Activated CD4-positive, alpha-beta T cell treated with anti-CD3 and anti-CD28 coated beads for 36 hours (primary cell): ENCODE measurements at regions of chr1 and their contacts with region 1.

Region 1: DNA sequence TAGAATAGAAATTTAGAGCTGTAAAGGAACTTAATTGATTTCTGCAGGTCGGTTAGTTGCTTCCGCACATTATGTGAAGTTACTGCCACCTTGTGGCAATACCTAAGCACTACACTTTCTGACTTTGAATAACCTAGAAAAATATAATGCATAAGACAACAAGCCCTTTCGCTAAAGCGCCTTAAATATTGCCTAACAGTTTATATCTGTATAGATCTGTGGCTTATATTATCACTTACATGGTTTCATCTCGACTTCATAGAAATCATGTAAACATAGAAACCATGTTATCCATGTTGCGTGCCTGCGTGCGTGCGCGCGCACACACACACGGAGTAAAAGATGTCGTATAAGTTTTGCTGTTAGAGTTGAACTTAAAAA is 10.9 kb upstream of the IFI16 start:
- DNase-seq: peak; percentile 50
- ATAC-seq: peak; percentile 56
- H3K4me3 Mint-ChIP-seq: no peak overlapping the region
- H3K27ac Mint-ChIP-seq: no peak overlapping the region
- H3K4me1 Mint-ChIP-seq: peaks cover 27% of the 10 kb centered on the region
- H3K27me3 Mint-ChIP-seq: no peaks in the 10 kb centered on the region

Region 2: GRCh38 chr1:158203693-158204457 is 794.9 kb before region 1 on chr1:
- CTCF ChIA-PET with region 1: interaction called, 7 read pairs
- POLR2A ChIA-PET with region 1: no interaction called
- intact Hi-C with region 1: loop called (anchors 1 to 2 kb)
- DNase-seq: peak; percentile 20
- ATAC-seq: peak; percentile 87
- H3K4me3 Mint-ChIP-seq: no peak overlapping the region
- H3K27ac Mint-ChIP-seq: no peak overlapping the region
- H3K4me1 Mint-ChIP-seq: peaks cover 9% of the 10 kb centered on the region
- H3K27me3 Mint-ChIP-seq: peaks cover 22% of the 10 kb centered on the region

Region 3: GRCh38 chr1:158248118-158248517 is 750.7 kb before region 1 on chr1:
- CTCF ChIA-PET with region 1: no interaction called
- POLR2A ChIA-PET with region 1: no interaction called
- intact Hi-C with region 1: loop called in 1 of 2 experiments (anchors 5 kb)
- DNase-seq: peak; percentile 52
- ATAC-seq: no peak
- H3K4me3 Mint-ChIP-seq: no peak overlapping the region
- H3K27ac Mint-ChIP-seq: no peak overlapping the region
- H3K4me1 Mint-ChIP-seq: peaks cover 21% of the 10 kb centered on the region
- H3K27me3 Mint-ChIP-seq: peaks cover 30% of the 10 kb centered on the region

Region 4: GRCh38 chr1:158506369-158506987 is 492.3 kb before region 1 on chr1:
- CTCF ChIA-PET with region 1: interaction called, 10 read pairs
- POLR2A ChIA-PET with region 1: no interaction called
- intact Hi-C with region 1: loop called (anchors 1 to 5 kb)
- DNase-seq: peak; percentile 64
- ATAC-seq: peak; percentile 58
- H3K4me3 Mint-ChIP-seq: no peak overlapping the region
- H3K27ac Mint-ChIP-seq: no peak overlapping the region
- H3K4me1 Mint-ChIP-seq: no peaks in the 10 kb centered on the region
- H3K27me3 Mint-ChIP-seq: peaks cover 27% of the 10 kb centered on the region

Region 5: GRCh38 chr1:158559696-158560095 is 439.1 kb before region 1 on chr1:
- CTCF ChIA-PET with region 1: no interaction called
- POLR2A ChIA-PET with region 1: no interaction called
- intact Hi-C with region 1: no loop called
- DNase-seq: no peak
- ATAC-seq: no peak
- H3K4me3 Mint-ChIP-seq: no peak overlapping the region
- H3K27ac Mint-ChIP-seq: no peak overlapping the region
- H3K4me1 Mint-ChIP-seq: no peaks in the 10 kb centered on the region
- H3K27me3 Mint-ChIP-seq: peaks cover 5% of the 10 kb centered on the region

Region 6: DNA sequence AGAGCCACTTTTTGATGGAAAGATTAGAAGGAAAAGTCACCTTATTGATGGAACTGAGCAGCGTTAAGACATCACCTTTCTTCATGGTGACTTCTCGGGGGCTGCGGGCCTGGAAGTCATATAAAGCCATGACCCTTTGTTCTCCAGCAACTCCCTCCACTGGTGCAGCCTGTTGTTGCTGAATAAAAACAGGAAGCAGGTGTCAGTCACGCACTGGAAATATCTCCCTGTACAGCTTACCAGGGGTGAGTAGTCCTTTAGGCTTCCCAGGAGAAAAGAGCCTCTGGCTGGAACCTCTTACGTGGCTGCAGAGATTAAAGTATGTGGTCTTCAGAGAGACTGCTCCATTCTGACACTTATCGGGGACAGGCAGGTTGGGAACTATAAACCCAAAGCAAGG is 344.2 kb before region 1 on chr1:
- CTCF ChIA-PET with region 1: interaction called, 3 read pairs
- POLR2A ChIA-PET with region 1: no interaction called
- intact Hi-C with region 1: loop called in 1 of 2 experiments (anchors 10 kb)
- DNase-seq: peak; percentile 4
- ATAC-seq: no peak
- H3K4me3 Mint-ChIP-seq: no peak overlapping the region
- H3K27ac Mint-ChIP-seq: no peak overlapping the region
- H3K4me1 Mint-ChIP-seq: peaks cover 3% of the 10 kb centered on the region
- H3K27me3 Mint-ChIP-seq: peaks cover 4% of the 10 kb centered on the region

Region 7: GRCh38 chr1:158793604-158794003 is 205.2 kb before region 1 on chr1:
- CTCF ChIA-PET with region 1: interaction called, 14 read pairs
- POLR2A ChIA-PET with region 1: no interaction called
- intact Hi-C with region 1: loop called (anchors 1 to 5 kb)
- DNase-seq: peak; percentile 51
- ATAC-seq: peak; percentile 36
- H3K4me3 Mint-ChIP-seq: no peak overlapping the region
- H3K27ac Mint-ChIP-seq: no peak overlapping the region
- H3K4me1 Mint-ChIP-seq: no peaks in the 10 kb centered on the region
- H3K27me3 Mint-ChIP-seq: peaks cover 5% of the 10 kb centered on the region

Region 8: GRCh38 chr1:158969855-158970254 is 28.9 kb before region 1 on chr1:
- CTCF ChIA-PET with region 1: interaction called, 10 read pairs
- POLR2A ChIA-PET with region 1: no interaction called
- intact Hi-C with region 1: no loop called
- DNase-seq: peak; percentile 25
- ATAC-seq: peak; percentile 72
- H3K4me3 Mint-ChIP-seq: no peak overlapping the region
- H3K27ac Mint-ChIP-seq: peak overlapping the region; percentile 88
- H3K4me1 Mint-ChIP-seq: peaks cover 25% of the 10 kb centered on the region
- H3K27me3 Mint-ChIP-seq: peaks cover 3% of the 10 kb centered on the region

Region 9: GRCh38 chr1:159030877-159031447 is 32.2 kb after region 1 on chr1:
- CTCF ChIA-PET with region 1: no interaction called
- POLR2A ChIA-PET with region 1: no interaction called
- intact Hi-C with region 1: no loop called
- DNase-seq: no peak
- ATAC-seq: no peak
- H3K4me3 Mint-ChIP-seq: no peak overlapping the region
- H3K27ac Mint-ChIP-seq: no peak overlapping the region
- H3K4me1 Mint-ChIP-seq: peaks cover 52% of the 10 kb centered on the region
- H3K27me3 Mint-ChIP-seq: no peaks in the 10 kb centered on the region

Region 10: GRCh38 chr1:159089184-159089791 is 90.5 kb after region 1 on chr1:
- CTCF ChIA-PET with region 1: no interaction called
- POLR2A ChIA-PET with region 1: no interaction called
- intact Hi-C with region 1: no loop called
- DNase-seq: no peak
- ATAC-seq: peak; percentile 37
- H3K4me3 Mint-ChIP-seq: no peak overlapping the region
- H3K27ac Mint-ChIP-seq: peak overlapping the region; percentile 78
- H3K4me1 Mint-ChIP-seq: peaks cover 51% of the 10 kb centered on the region
- H3K27me3 Mint-ChIP-seq: peaks cover 2% of the 10 kb centered on the region

Region 11: DNA sequence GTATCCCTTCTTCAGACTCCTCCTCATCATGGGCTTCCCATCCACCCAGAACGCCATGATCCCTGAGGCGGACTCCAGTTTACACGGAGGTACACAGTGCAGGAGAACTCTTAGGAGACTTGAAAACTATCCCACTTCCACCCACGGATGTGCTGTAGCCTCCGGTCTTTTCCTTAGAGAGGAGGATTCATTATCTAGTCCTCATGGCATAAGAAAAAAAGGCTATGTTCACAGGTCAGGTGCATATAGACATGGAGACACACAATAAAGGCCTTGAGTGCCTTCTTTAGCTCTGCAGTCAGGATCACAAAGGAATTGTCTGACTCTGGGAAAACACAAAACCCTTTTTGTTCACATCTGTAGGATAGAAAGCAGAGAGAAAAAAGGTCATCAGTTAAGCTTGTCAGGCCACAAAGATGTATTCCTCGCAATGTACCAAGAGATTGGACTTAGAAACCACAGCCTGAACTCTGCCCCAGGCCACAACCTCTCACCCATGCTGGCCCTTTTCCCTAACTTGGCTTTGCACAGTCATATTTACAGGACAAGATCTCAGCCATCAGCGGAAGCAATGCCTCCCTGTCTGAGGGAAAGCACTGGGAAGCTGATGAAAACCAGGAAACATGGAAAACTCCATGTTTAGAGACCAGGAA is 706.6 kb after region 1 on chr1:
- CTCF ChIA-PET with region 1: no interaction called
- POLR2A ChIA-PET with region 1: no interaction called
- intact Hi-C with region 1: no loop called
- DNase-seq: no peak
- ATAC-seq: no peak
- H3K4me3 Mint-ChIP-seq: no peak overlapping the region
- H3K27ac Mint-ChIP-seq: no peak overlapping the region
- H3K4me1 Mint-ChIP-seq: no peaks in the 10 kb centered on the region
- H3K27me3 Mint-ChIP-seq: peaks cover 2% of the 10 kb centered on the region